ENCODE measurements at regions of chr11 and their contacts with region 1.

Region 1: GRCh38 chr11:2305140-2305840 is 3.5 kb downstream of the TSPAN32 start:
- DNase-seq: peak; percentile 91
- ATAC-seq: peak; percentile 36
- H3K4me3 Mint-ChIP-seq: peak overlapping the region; percentile 100
- H3K27ac Mint-ChIP-seq: peak overlapping the region; percentile 91
- H3K4me1 Mint-ChIP-seq: peaks cover 21% of the 10 kb centered on the region
- H3K27me3 Mint-ChIP-seq: no peaks in the 10 kb centered on the region

Region 2: DNA sequence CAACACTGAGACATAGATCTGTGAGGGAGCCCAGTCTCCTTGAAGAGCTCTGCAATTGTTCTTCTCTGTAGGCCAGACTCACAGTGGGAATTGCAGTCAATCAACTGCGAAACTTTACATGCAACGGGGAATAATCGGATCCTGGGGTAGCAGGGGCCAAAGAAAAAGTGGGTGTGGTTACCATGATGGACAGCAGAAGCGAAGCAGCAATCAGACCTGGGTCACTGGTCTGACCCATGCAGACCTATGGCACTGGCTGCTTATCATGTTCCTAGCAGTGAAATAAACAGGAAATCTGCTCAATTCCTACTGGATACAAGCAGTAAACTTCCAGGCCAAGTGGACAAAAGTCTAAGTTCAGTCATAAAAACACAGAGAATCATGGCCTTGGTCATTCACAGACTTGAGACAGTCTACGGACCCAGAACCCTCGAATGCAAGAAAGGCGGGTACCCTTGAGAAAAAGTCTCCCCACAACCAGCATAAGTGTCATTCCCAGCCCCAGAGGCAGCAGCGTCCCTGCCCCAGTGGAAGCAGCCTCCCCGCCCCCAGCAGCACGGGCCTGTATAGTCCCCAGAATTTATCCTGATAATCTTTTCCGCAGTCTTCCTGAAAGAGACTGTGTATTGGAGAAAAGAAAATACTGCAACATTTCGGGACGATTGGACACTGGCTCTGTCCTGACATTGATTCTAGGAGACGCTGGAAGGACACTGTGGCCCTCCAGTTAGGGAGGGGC is 69.5 kb before region 1 on chr11:
- POLR2A ChIA-PET with region 1: no interaction called
- DNase-seq: no peak
- ATAC-seq: no peak
- H3K4me3 Mint-ChIP-seq: no peak overlapping the region
- H3K27ac Mint-ChIP-seq: no peak overlapping the region
- H3K4me1 Mint-ChIP-seq: no peaks in the 10 kb centered on the region
- H3K27me3 Mint-ChIP-seq: peaks cover 14% of the 10 kb centered on the region

Region 3: DNA sequence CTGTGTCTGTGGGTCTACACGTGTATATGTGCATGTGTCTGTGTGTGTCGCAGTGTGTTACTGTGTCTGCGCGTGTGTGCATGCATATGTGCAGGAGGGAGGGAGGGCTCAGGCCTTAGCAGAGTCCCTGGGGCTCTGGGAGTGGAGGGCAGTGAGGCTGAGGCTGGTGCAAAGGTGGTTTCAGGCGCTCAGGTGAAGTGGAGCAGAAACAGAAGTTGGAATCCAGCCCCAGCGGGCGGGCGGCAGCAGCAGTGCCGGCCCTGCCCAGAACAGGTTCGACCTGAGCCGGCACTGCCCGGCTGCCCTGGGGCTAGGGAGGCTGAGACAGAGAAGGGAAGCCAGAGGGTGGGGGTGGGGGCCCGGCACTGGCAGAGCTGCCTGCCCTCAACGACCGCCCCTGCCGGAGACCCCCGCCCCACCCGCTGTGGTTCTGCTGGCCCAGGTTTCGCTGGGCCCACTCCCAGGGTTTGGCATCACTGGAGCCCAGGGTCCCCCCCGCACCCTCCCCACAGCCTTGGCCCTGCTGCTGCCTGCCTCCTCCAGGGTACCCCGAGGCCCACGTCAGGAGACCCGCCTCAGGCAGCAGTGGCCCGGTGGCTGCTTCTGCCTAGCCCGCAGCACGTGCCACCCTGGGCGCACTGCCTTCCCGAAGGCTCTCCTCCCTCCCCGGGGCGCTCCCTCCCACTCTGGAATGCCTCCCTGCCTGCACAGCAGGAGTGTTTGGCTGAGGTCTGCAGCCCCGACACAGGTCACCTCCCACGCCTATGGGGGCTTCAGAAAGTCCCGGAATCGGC is 48.2 kb before region 1 on chr11:
- POLR2A ChIA-PET with region 1: no interaction called
- DNase-seq: peak; percentile 17
- ATAC-seq: no peak
- H3K4me3 Mint-ChIP-seq: no peak overlapping the region
- H3K27ac Mint-ChIP-seq: peak overlapping the region; percentile 7
- H3K4me1 Mint-ChIP-seq: no peaks in the 10 kb centered on the region
- H3K27me3 Mint-ChIP-seq: peaks cover 13% of the 10 kb centered on the region

Region 4: GRCh38 chr11:2377511-2378443 is 72.5 kb after region 1 on chr11:
- POLR2A ChIA-PET with region 1: interaction called, 27 read pairs
- DNase-seq: peak; percentile 70
- ATAC-seq: peak; percentile 51
- H3K4me3 Mint-ChIP-seq: peak overlapping the region; percentile 84
- H3K27ac Mint-ChIP-seq: peak overlapping the region; percentile 75
- H3K4me1 Mint-ChIP-seq: peaks cover 7% of the 10 kb centered on the region
- H3K27me3 Mint-ChIP-seq: peaks cover 4% of the 10 kb centered on the region

Region 5: DNA sequence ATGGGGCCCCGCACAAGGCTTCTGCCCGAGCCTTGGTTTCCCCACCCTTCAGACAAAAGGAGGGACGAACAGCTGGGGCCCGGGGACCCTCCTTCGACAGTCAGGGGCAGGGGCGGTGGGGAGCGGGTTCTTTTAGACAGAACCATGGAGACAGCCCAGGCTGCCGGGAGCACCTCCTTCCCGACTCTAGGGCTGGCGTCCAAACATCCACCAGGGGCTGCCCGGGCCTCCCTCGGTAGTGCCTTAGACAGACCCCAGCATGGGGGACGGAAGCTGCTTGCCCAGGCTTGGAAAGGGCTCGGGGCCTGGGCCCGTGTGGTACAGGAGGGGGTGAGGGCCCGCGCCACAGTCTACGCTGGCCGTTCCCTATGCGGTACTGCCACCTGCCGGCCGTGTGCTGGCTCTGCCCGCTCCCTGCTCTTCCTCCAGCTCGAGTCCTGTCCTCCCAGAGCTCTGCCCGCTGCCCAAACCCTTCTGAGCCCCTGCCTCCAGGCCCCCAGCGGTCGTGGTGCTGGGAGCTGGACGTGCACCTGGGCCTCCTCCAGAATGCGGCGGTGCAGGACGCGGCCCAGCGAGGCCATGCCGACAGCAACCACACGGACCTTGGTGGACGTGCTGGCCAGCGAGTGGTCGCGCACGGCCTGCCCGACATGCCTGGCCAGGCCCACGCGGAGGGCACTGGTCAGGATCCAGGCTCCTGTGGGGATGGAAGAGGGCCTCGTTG is 115.4 kb after region 1 on chr11:
- POLR2A ChIA-PET with region 1: interaction called, 13 read pairs
- DNase-seq: peak; percentile 82
- ATAC-seq: peak; percentile 93
- H3K4me3 Mint-ChIP-seq: no peak overlapping the region
- H3K27ac Mint-ChIP-seq: no peak overlapping the region
- H3K4me1 Mint-ChIP-seq: no peaks in the 10 kb centered on the region
- H3K27me3 Mint-ChIP-seq: no peaks in the 10 kb centered on the region